ENCODE measurements at regions of chr3 and their contacts with region 1.

Region 1: DNA sequence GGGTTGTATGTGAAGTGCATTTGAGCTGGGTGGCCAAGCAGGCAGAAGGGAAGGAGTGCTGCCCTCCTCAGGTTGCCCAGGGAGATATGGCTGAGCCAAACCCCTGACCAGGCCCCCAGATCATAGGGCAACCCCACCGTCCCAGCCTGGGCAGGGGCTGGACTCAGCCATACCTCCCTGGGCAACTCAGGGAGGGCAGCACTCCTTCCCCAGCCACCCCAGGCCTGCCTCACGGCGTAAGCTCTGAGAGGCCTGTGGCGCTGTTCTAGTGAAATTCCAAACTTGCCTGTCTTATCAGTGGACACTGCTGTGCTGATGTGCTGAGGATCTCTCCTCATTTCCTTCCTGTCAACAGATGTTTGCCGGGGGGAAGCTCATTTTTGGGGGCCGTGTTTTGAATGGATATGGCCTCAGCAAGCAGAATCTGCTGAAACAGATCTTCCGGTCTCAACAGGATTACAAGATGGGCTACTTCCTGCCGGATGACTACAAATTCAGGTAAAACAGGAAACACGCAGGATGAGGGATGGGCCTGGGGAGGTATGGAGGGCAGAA is 57.6 kb upstream of the FGD5 start:
- DNase-seq: no peak
- H3K4me3 ChIP-seq: no peak overlapping the region
- H3K27ac ChIP-seq: no peak overlapping the region
- H3K4me1 ChIP-seq: no peaks in the 10 kb centered on the region
- H3K27me3 ChIP-seq: no peaks in the 10 kb centered on the region
- CTCF ChIP-seq: no peak
- POLR2A ChIP-seq: no peak

Region 2: GRCh38 chr3:13574798-13575451 is 1186.3 kb before region 1 on chr3:
- intact Hi-C with region 1: loop called (anchors 5 kb)
- DNase-seq: no peak
- H3K4me3 ChIP-seq: no peak overlapping the region
- H3K27ac ChIP-seq: peak overlapping the region in 1 of 2 donors; percentile 67
- H3K4me1 ChIP-seq: no peaks in the 10 kb centered on the region
- H3K27me3 ChIP-seq: no peaks in the 10 kb centered on the region
- CTCF ChIP-seq: no peak
- POLR2A ChIP-seq: no peak

Region 3: GRCh38 chr3:14740983-14741382 is 20.2 kb before region 1 on chr3:
- intact Hi-C with region 1: no loop called
- DNase-seq: no peak
- H3K4me3 ChIP-seq: no peak overlapping the region
- H3K27ac ChIP-seq: no peak overlapping the region
- H3K4me1 ChIP-seq: no peaks in the 10 kb centered on the region
- H3K27me3 ChIP-seq: no peaks in the 10 kb centered on the region
- CTCF ChIP-seq: no peak
- POLR2A ChIP-seq: no peak